ENCODE measurements at regions of chrX and their contacts with region 1.

Region 1: DNA sequence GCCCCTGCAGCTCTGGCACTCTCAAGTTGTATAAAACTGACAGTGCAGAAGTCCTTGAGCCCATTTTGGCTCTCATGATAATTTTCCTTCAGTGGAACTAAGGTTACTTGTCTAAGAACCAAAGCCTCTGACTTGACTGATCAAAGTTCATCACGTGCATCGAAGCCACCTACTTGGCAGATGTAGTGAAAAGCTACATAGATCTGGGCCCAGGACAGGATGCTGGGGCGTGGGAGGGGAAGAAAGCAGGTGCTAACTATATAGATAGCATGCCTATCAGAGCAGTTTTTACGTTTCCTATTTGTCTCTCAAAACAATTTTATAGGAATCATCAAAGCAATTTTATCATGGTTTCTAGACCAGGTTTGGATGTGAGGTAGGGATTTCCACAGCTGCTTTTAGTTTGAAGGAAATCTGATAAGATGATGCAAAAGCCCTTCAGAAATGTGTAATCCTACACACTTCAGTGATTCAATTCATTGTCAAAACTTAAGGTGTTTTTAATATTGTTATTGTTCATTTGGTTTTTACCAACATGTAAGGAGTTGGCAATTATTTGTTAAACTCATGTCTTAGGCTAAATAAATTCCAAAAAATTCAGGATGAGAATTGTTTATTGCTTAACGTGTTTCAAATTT is 1.2 kb upstream of the CD40LG start:
- DNase-seq: peak; percentile 78
- H3K4me3 Mint-ChIP-seq: peak overlapping the region; percentile 93
- H3K27ac Mint-ChIP-seq: peak overlapping the region; percentile 99
- H3K4me1 Mint-ChIP-seq: peaks cover 53% of the 10 kb centered on the region
- H3K27me3 Mint-ChIP-seq: no peaks in the 10 kb centered on the region

Region 2: GRCh38 chrX:136588041-136588788 is 58.5 kb before region 1 on chrX:
- CTCF ChIA-PET with region 1: no interaction called
- POLR2A ChIA-PET with region 1: interaction called, 3 read pairs
- intact Hi-C with region 1: loop called (anchors 2 kb)
- DNase-seq: no peak
- H3K4me3 Mint-ChIP-seq: peak overlapping the region; percentile 12
- H3K27ac Mint-ChIP-seq: peak overlapping the region; percentile 74
- H3K4me1 Mint-ChIP-seq: peaks cover 66% of the 10 kb centered on the region
- H3K27me3 Mint-ChIP-seq: no peaks in the 10 kb centered on the region

Region 3: DNA sequence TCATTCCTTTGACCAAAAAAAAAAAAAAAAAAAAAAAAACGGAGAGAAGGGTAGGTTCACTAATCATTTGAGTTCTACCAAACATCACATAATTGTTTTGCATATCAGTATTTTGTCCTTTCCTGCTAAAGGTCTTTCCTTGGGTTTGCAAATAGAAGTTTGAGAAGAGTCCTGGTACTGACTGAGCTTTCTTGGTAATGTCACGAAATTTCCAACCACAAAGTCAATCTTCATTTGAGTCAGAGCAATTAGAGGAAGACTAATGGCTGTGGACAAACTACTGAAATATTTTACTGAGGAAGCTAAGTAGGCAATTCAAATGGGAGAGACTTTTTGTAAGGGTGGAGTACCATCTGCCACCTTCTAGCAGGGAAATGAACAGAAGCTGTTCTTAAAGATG is 20.5 kb before region 1 on chrX:
- CTCF ChIA-PET with region 1: interaction called, 3 read pairs
- POLR2A ChIA-PET with region 1: interaction called, 61 read pairs
- intact Hi-C with region 1: loop called (anchors 2 kb)
- DNase-seq: no peak
- H3K4me3 Mint-ChIP-seq: no peak overlapping the region
- H3K27ac Mint-ChIP-seq: peak overlapping the region; percentile 82
- H3K4me1 Mint-ChIP-seq: peaks cover 89% of the 10 kb centered on the region
- H3K27me3 Mint-ChIP-seq: no peaks in the 10 kb centered on the region

Region 4: GRCh38 chrX:136662104-136662503 is 15.4 kb after region 1 on chrX:
- CTCF ChIA-PET with region 1: interaction called, 3 read pairs
- POLR2A ChIA-PET with region 1: interaction called, 9 read pairs
- intact Hi-C with region 1: loop called (anchors 2 kb)
- DNase-seq: no peak
- H3K4me3 Mint-ChIP-seq: peak overlapping the region; percentile 23
- H3K27ac Mint-ChIP-seq: peak overlapping the region; percentile 83
- H3K4me1 Mint-ChIP-seq: peaks cover 88% of the 10 kb centered on the region
- H3K27me3 Mint-ChIP-seq: no peaks in the 10 kb centered on the region

Region 5: GRCh38 chrX:136694431-136695087 is 47.8 kb after region 1 on chrX:
- CTCF ChIA-PET with region 1: interaction called, 10 read pairs
- POLR2A ChIA-PET with region 1: interaction called, 3 read pairs
- intact Hi-C with region 1: loop called (anchors 2 kb)
- DNase-seq: no peak
- H3K4me3 Mint-ChIP-seq: peak overlapping the region; percentile 77
- H3K27ac Mint-ChIP-seq: peak overlapping the region; percentile 97
- H3K4me1 Mint-ChIP-seq: peaks cover 75% of the 10 kb centered on the region
- H3K27me3 Mint-ChIP-seq: no peaks in the 10 kb centered on the region

Measured in activated CD4-positive, alpha-beta memory T cell treated with anti-CD3 and anti-CD28 coated beads for 36 hours (primary cell).